ENCODE measurements at regions of chr7 and their contacts with region 1.

Region 1: DNA sequence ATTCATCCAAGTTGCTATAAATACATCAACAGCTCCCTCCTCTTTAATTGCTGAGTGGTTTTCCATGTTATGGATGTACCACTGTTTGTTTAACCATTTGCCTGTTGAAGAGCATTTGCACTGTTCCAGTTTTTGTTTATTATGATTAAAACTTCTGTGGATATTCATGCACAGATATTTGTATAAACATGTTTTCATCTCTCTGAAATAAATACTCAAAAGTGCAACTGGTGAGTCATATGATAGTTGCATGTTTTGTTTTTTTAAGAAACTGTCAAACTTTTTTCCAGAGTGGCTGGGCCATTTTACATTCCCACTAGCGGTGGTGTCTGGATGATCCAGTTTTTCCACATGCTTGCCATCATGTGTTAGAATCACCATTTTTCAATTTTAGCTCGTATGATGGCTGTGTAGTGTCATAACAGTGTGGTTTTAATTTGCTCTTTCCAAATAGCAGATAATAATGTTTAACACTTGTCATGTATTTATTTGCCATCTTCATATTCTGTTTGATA is 33.6 kb downstream of the MEOX2 start:
- DNase-seq: no peak
- H3K4me3 ChIP-seq: no peak overlapping the region
- H3K27ac ChIP-seq: no peak overlapping the region
- H3K4me1 ChIP-seq: peaks cover 10% of the 10 kb centered on the region
- H3K27me3 ChIP-seq: no peaks in the 10 kb centered on the region
- CTCF ChIP-seq: no peak
- POLR2A ChIP-seq: no peak

Region 2: DNA sequence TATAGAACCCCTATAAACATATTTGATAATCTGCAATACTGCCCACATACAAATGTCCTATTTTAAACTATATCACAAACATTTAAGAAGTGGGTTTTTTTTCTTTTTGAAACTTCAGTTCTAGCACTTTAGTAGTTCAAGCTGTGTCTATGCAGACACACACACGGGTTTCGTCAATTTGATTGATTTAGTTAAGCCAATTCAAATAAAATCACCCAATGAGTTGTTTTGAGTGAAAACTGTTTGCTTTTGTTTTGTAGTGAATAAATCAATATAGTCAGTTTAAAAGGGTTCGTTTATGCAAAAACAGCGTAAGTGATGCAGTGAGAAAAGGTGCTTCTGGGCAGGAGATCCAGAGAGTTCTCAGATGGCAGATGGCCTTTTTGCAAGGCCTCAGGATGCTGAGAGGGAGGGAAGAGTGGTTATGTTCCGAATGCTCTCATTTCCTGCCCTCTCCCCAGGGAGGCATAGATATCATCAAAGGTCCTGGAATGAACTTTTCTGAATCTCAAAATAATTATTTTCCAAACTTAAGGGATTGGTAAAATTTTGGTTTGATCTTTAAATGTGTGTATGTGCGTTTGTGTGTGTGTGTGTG is 193.7 kb before region 1 on chr7:
- CTCF ChIA-PET with region 1: no interaction called
- POLR2A ChIA-PET with region 1: no interaction called
- dilution Hi-C with region 1: no loop called
- intact Hi-C with region 1: no loop called
- DNase-seq: no peak
- H3K4me3 ChIP-seq: no peak overlapping the region
- H3K27ac ChIP-seq: no peak overlapping the region
- H3K4me1 ChIP-seq: peaks cover 4% of the 10 kb centered on the region
- H3K27me3 ChIP-seq: no peaks in the 10 kb centered on the region
- CTCF ChIP-seq: no peak
- POLR2A ChIP-seq: no peak

Region 3: GRCh38 chr7:15669443-15670090 is 16.7 kb after region 1 on chr7:
- CTCF ChIA-PET with region 1: no interaction called
- POLR2A ChIA-PET with region 1: no interaction called
- dilution Hi-C with region 1: no loop called
- intact Hi-C with region 1: loop called (anchors 2 kb)
- DNase-seq: no peak
- H3K4me3 ChIP-seq: no peak overlapping the region
- H3K27ac ChIP-seq: no peak overlapping the region
- H3K4me1 ChIP-seq: peaks cover 7% of the 10 kb centered on the region
- H3K27me3 ChIP-seq: no peaks in the 10 kb centered on the region
- CTCF ChIP-seq: no peak
- POLR2A ChIP-seq: no peak

Measured in endothelial cell of umbilical vein (primary cell).